Activated CD4-positive, alpha-beta T cell treated with anti-CD3 and anti-CD28 coated beads, Interleukin-2, amount 10 ng/mL, durations not matched to agents 7 days and 5 days (primary cell): ENCODE measurements at regions of chr12 and their contacts with region 1.

Region 1: GRCh38 chr12:49945394-49946080 is 5.0 kb upstream of the AQP2 start:
- DNase-seq: peak; percentile 81
- H3K4me3 Mint-ChIP-seq: peak overlapping the region; percentile 69
- H3K27ac Mint-ChIP-seq: peak overlapping the region; percentile 89
- H3K4me1 Mint-ChIP-seq: peaks cover 28% of the 10 kb centered on the region
- H3K27me3 Mint-ChIP-seq: peaks cover 2% of the 10 kb centered on the region

Region 2: GRCh38 chr12:49930515-49931288 is 14.8 kb before region 1 on chr12:
- CTCF ChIA-PET with region 1: interaction called, 25 read pairs
- POLR2A ChIA-PET with region 1: no interaction called
- DNase-seq: no peak
- H3K4me3 Mint-ChIP-seq: no peak overlapping the region
- H3K27ac Mint-ChIP-seq: no peak overlapping the region
- H3K4me1 Mint-ChIP-seq: no peaks in the 10 kb centered on the region
- H3K27me3 Mint-ChIP-seq: peaks cover 7% of the 10 kb centered on the region

Region 3: GRCh38 chr12:49959570-49960465 is 14.3 kb after region 1 on chr12:
- CTCF ChIA-PET with region 1: interaction called, 42 read pairs
- POLR2A ChIA-PET with region 1: no interaction called
- DNase-seq: no peak
- H3K4me3 Mint-ChIP-seq: no peak overlapping the region
- H3K27ac Mint-ChIP-seq: no peak overlapping the region
- H3K4me1 Mint-ChIP-seq: peaks cover 10% of the 10 kb centered on the region
- H3K27me3 Mint-ChIP-seq: peaks cover 82% of the 10 kb centered on the region